Heart left ventricle (tissue), 16 donors: ENCODE measurements at regions of chr2 and their contacts with region 1.

Region 1: DNA sequence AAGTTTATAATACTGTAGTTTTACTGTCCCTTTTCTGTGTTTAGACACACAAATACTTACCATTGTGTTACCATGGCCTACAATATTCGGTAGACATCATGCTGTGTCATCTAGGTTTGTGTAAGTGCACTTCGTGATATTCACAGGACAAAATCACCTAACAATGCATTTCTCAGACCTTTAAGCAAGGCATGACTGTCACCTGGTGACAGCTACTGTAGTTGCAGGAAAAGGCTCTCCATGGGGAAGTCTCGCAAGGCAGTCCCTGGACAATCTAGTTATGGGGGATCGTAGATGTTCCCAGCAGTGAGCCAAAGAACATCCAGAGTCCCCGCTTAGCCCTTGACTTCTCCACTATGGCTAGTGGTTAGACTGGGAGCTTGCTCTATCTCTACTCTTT is 73.1 kb downstream of the EIF2AK3 start:
- DNase-seq: no peak
- ATAC-seq: no peak
- H3K4me3 ChIP-seq: no peak overlapping the region
- H3K27ac ChIP-seq: no peak overlapping the region
- H3K4me1 ChIP-seq: peaks cover 0 to 7% (median 0%) of the 10 kb centered on the region in 12 donors
- H3K27me3 ChIP-seq: peaks cover 0 to 12% (median 7%) of the 10 kb centered on the region in 9 donors
- CTCF ChIP-seq: peak in 1 of 12 donors; percentile 12
- POLR2A ChIP-seq: no peak

Region 2: DNA sequence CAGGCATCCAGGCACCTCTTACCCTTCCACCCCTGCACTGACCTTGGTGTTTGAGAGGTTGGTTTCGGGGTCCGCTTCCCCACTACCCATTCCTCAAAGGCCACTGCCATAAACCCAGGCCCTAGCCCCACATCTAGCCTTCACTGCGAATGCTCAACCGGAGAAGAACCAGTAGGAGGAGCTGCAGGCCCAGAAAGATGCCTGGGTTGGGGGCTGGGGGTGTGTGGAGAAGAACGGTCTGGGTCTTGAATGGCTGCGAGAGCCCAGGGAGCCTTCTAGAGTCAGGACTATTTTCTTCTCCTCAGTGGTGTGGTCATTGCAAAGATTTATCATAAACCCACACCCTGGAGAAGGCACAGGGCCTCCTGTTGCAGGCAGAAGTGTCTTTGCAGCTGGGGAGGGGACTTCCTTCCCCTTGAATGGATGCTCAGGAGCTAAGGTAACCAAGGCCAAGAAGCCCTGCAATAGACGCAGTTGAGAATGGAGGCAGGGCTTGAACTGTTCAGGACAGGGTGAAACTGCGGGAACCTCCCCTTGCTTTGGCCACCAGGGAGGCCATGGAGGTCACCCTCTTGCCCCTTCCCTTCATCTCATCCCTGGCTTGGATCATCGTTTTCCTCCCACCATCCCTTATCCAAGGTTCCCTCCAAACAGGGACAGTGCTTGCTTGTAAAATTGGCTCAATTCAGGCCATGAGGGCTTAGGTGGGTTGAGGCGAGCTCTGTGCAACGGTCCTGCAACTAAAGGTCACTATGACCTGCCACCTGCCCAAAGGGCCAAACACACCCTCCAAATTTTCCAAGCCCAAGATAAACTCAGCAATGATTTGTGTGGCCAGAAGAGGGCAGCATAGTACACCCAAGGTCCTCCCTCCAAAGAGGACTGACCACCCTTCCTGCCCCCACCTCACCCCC is 363.1 kb before region 1 on chr2:
- intact Hi-C with region 1: loop called in 6 of 10 experiments (anchors 5 to 10 kb)
- DNase-seq: no peak
- ATAC-seq: peak in 3 of 4 donors; percentile 37 to 53 (median 40)
- H3K4me3 ChIP-seq: no peak overlapping the region
- H3K27ac ChIP-seq: no peak overlapping the region
- H3K4me1 ChIP-seq: peaks cover 0 to 8% (median 0%) of the 10 kb centered on the region in 12 donors
- H3K27me3 ChIP-seq: peaks cover 0 to 3% (median 0%) of the 10 kb centered on the region in 9 donors
- CTCF ChIP-seq: peak; percentile 43 to 71 (median 58)
- POLR2A ChIP-seq: no peak

Region 3: DNA sequence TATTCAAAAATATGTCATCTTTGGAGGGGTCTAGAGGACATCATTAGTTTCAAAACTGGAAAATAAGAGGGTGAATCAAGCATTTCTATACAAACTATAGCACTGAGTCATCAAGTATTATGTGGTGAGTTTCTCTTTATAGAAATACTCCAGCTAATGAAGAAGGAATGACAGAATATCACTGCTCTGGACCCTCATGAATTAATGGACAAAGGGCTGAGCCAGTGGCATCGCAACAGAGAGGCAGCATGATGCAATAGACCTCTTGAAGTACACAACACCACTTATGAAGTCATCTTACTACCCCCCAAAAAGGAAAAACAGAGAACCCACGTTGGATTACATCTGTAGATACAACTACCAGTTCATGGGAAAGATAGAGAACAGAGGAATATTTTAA is 100.5 kb after region 1 on chr2:
- intact Hi-C with region 1: no loop called
- DNase-seq: no peak
- ATAC-seq: no peak
- H3K4me3 ChIP-seq: no peak overlapping the region
- H3K27ac ChIP-seq: no peak overlapping the region
- H3K4me1 ChIP-seq: peaks cover 0 to 34% (median 19%) of the 10 kb centered on the region in 12 donors
- H3K27me3 ChIP-seq: no peaks in the 10 kb centered on the region
- CTCF ChIP-seq: no peak
- POLR2A ChIP-seq: no peak